Sciatic nerve (tissue), 2 donors: ENCODE measurements at regions of chr19 and their contacts with region 1.

Region 1: DNA sequence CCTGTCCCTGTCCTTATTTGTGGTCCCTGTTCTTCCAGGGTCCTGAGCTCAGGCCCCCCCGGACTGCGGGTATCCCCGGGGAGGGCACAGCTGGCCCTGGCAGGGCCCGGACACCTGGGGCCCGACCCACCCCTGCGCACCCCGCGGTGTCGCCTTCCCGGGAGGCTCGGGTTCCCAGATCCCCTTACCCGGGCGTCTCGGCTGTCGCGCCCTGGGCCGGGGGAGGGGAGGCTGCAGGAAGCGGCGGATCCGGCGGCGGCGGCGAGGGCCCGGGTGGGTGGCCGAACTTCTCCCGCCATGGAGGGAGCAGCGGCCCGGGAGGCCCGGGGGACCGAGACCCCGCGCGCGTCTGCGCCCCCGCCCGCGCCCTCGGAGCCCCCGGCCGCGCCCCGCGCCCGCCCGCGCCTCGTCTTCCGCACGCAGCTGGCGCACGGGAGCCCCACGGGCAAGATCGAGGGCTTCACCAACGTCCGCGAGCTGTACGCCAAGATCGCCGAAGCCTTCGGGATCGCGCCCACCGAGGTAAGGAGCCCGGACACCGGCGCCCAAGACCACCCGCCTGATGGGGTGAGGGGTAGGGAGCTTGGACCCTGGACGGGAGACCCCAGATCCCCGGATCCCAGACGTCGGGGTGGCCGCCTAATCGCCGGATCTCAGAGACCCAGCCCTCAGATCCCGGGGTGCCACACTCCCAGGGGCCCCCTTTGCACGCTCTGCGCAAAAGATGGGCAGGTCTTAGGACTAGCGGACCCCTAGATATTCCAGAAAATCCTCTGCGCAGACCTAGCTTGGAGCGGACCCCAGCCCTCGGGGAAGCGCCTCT is at the start of gene GIPC3:
- DNase-seq: no peak
- ATAC-seq: peak; percentile 23
- total RNA-seq, gene GIPC3: 2.4 TPM

Region 2: DNA sequence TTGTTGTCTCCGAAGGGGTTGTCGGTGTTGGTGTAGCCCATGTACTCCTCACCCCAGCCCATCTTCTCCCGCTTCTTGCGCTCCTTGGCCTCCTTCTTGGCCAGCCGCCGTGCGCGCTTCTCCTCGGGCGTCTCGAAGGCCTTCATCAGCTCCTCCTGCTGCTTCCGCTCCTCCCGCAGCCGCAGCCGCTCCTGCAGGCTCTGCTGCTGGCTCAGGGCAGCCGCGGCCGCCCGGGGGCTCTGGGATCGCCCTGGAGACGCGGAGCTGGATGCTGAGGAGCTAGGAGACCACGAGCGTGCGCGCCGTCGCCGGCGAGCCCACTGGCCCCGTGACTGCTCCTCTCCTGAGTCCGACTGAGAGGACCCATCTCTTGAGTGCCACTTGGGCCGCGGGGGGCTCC is 38.2 kb after region 1 on chr19:
- intact Hi-C with region 1: loop called (anchors 2 kb)
- DNase-seq: no peak
- ATAC-seq: no peak